ENCODE measurements at regions of chr17 and their contacts with region 1.

Region 1: DNA sequence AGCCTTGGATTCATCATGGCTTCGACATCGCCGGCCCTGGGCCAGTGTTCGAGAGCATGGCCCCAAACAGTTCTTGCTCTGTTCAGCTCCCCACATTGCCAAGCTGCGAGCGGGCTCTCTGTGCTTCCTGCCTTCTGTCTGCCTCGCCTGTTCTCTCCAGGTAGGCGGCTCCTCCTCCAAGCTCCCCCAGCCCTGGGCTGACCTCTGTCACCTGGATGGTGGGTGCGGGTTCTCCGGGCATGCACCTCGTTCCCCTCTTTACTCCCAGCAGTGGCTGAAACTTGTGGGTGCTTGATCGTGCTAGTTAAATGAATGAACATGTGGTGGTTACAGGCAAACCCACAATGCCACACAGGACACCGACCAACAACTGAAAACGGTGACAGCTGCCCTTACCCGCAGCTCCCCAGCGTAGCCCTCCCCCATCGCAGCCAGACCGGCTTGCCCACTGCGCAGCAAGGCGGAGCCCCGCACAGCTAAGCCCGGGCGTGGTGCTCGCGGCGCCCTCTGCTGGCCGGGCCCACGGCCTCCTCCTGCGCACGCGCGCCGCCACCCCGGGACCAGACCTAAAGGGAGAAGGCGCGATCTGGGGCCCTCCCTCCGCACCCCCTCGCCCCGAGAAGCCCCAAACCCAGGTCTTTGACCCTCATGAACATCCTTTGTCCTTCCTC is 23.0 kb upstream of the EIF1 start:
- DNase-seq: peak; percentile 83
- H3K4me3 ChIP-seq: peak overlapping the region in 2 of 3 experiments; percentile 13 to 32
- H3K27ac ChIP-seq: peak overlapping the region; percentile 49
- H3K4me1 ChIP-seq: peaks cover 23% of the 10 kb centered on the region
- H3K27me3 ChIP-seq: no peaks in the 10 kb centered on the region
- CTCF ChIP-seq: peak; percentile 96 to 99
- POLR2A ChIP-seq: no peak

Region 2: GRCh38 chr17:40818733-40819527 is 846.8 kb before region 1 on chr17:
- CTCF ChIA-PET with region 1: interaction called, 8 read pairs
- POLR2A ChIA-PET with region 1: no interaction called
- dilution Hi-C with region 1: no loop called
- intact Hi-C with region 1: loop called (anchors 5 kb)
- DNase-seq: peak; percentile 77
- H3K4me3 ChIP-seq: peak overlapping the region; percentile 49 to 99 (median 98)
- H3K27ac ChIP-seq: peak overlapping the region; percentile 75
- H3K4me1 ChIP-seq: peaks cover 9% of the 10 kb centered on the region
- H3K27me3 ChIP-seq: no peaks in the 10 kb centered on the region
- CTCF ChIP-seq: no peak
- POLR2A ChIP-seq: peak; percentile 48

Region 3: GRCh38 chr17:40909351-40909750 is 756.4 kb before region 1 on chr17:
- CTCF ChIA-PET with region 1: interaction called, 34 read pairs
- POLR2A ChIA-PET with region 1: no interaction called
- dilution Hi-C with region 1: no loop called
- intact Hi-C with region 1: loop called (anchors 1 kb)
- DNase-seq: peak; percentile 90
- H3K4me3 ChIP-seq: no peak overlapping the region
- H3K27ac ChIP-seq: no peak overlapping the region
- H3K4me1 ChIP-seq: peaks cover 13% of the 10 kb centered on the region
- H3K27me3 ChIP-seq: peaks cover 0 to 3% of the 10 kb centered on the region in 2 experiments
- CTCF ChIP-seq: peak; percentile 75 to 77
- POLR2A ChIP-seq: no peak

Region 4: GRCh38 chr17:41496820-41497408 is 168.8 kb before region 1 on chr17:
- CTCF ChIA-PET with region 1: interaction called, 56 read pairs
- POLR2A ChIA-PET with region 1: no interaction called
- dilution Hi-C with region 1: no loop called
- intact Hi-C with region 1: no loop called
- DNase-seq: peak; percentile 83
- H3K4me3 ChIP-seq: no peak overlapping the region
- H3K27ac ChIP-seq: no peak overlapping the region
- H3K4me1 ChIP-seq: peaks cover 38% of the 10 kb centered on the region
- H3K27me3 ChIP-seq: no peaks in the 10 kb centered on the region
- CTCF ChIP-seq: peak; percentile 91 to 92
- POLR2A ChIP-seq: no peak

Region 5: GRCh38 chr17:41579484-41580243 is 86.0 kb before region 1 on chr17:
- CTCF ChIA-PET with region 1: interaction called, 24 read pairs
- POLR2A ChIA-PET with region 1: no interaction called
- dilution Hi-C with region 1: no loop called
- intact Hi-C with region 1: loop called (anchors 1 kb)
- DNase-seq: peak; percentile 81
- H3K4me3 ChIP-seq: no peak overlapping the region
- H3K27ac ChIP-seq: no peak overlapping the region
- H3K4me1 ChIP-seq: no peaks in the 10 kb centered on the region
- H3K27me3 ChIP-seq: peaks cover 0 to 4% of the 10 kb centered on the region in 2 experiments
- CTCF ChIP-seq: peak; percentile 80 to 92
- POLR2A ChIP-seq: no peak

Region 6: DNA sequence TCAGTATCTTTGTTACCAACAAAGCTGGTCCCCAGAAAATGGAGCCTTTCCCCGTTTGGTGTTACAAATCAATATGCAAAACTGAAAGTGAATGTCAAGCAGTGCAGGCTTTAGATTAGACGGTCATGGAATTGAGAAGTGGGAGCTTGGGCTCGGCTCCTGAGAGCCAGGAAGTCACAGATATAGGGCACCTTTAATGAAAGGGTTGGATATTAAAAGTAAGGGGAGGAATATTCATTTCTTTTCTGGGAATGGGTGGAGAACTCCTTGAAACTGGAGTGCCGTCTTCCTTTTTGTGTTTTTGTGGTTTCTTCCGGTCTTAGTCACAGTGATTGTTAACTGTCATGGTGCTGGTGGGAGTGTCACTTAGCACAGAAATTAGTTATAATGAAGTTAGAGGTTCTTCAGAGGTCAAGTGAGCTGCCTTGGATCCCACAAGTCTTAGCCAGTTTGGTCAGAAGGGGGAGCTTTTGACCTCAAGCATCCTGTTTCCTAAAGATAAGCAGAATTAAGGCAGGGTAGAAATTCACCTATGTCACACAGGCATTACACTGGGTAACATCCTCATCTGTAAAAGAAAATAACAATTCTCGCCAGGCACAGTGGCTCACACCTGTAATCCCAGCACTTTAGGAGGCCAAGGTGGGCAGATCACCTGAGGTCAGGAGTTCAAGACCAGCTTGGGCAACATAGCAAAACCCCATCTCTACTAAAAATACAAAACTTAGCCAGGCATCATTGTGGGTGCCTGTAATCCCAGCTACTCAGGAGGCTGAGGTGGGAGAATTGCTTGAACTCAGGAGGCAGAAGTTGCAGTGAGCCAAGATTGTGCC is 13.4 kb after region 1 on chr17:
- CTCF ChIA-PET with region 1: interaction called, 20 read pairs
- POLR2A ChIA-PET with region 1: no interaction called
- dilution Hi-C with region 1: no loop called
- intact Hi-C with region 1: no loop called
- DNase-seq: peak; percentile 63
- H3K4me3 ChIP-seq: peak overlapping the region in 2 of 3 experiments; percentile 43 to 64
- H3K27ac ChIP-seq: peak overlapping the region; percentile 90
- H3K4me1 ChIP-seq: peaks cover 14% of the 10 kb centered on the region
- H3K27me3 ChIP-seq: peaks cover 0 to 7% of the 10 kb centered on the region in 2 experiments
- CTCF ChIP-seq: no peak
- POLR2A ChIP-seq: no peak